Mammary epithelial cell (primary cell): ENCODE measurements at regions of chrX and their contacts with region 1.

Region 1: DNA sequence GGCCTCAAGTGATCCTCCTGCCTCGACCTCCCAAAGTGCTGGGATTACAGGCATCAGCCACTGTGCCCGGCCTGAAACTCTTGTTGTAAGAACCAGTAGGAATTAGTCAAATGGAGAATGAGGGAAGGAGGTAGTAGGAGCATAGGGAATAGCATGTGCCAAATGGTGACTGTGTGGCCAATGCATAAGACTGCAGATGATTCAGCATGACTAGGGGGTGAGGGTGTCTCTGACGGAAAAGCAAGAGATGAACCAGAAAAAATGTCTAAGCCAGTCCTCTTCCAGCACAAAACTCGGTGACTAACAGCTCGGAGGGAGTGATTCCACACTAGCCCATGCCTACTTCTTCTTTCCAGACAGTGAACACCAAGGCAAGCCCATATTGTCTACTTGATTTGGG is 58.2 kb upstream of the DUSP21 start:
- DNase-seq: peak; percentile 67
- H3K4me3 ChIP-seq: no peak overlapping the region
- H3K27ac ChIP-seq: no peak overlapping the region
- H3K4me1 ChIP-seq: no peaks in the 10 kb centered on the region
- H3K27me3 ChIP-seq: no peaks in the 10 kb centered on the region
- CTCF ChIP-seq: no peak

Region 2: DNA sequence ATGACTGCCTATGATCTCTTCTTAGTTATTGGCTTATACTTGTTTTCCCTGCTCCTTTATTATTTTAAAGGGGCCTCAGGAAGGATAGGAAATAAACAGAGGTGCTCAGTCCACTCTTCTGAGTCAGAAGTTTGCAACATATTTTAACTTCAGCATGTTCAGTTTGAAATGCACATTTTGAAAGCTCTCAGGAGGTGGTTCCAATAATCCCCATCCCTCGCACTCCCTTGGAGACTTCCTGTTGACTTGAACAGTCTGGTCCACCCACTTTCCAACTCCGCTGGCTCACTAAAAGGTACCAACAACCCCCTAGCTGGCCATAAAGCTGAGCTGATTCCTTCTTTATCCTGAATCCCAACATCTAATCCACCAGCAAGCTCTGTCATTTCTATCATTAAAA is 20.1 kb before region 1 on chrX:
- CTCF ChIA-PET with region 1: no interaction called
- dilution Hi-C with region 1: no loop called
- in situ Hi-C with region 1: no loop called
- intact Hi-C with region 1: no loop called
- DNase-seq: no peak
- H3K4me3 ChIP-seq: no peak overlapping the region
- H3K27ac ChIP-seq: no peak overlapping the region
- H3K4me1 ChIP-seq: no peaks in the 10 kb centered on the region
- H3K27me3 ChIP-seq: peaks cover 7% of the 10 kb centered on the region
- CTCF ChIP-seq: no peak

Region 3: GRCh38 chrX:44843318-44843702 is 57.7 kb after region 1 on chrX:
- CTCF ChIA-PET with region 1: no interaction called
- dilution Hi-C with region 1: loop called (anchors 5 kb)
- in situ Hi-C with region 1: no loop called
- intact Hi-C with region 1: no loop called
- DNase-seq: peak; percentile 11
- H3K4me3 ChIP-seq: no peak overlapping the region
- H3K27ac ChIP-seq: no peak overlapping the region
- H3K4me1 ChIP-seq: no peaks in the 10 kb centered on the region
- H3K27me3 ChIP-seq: no peaks in the 10 kb centered on the region
- CTCF ChIP-seq: no peak